Body of pancreas (tissue), 4 donors: ENCODE measurements at regions of chr20 and their contacts with region 1.

Region 1: DNA sequence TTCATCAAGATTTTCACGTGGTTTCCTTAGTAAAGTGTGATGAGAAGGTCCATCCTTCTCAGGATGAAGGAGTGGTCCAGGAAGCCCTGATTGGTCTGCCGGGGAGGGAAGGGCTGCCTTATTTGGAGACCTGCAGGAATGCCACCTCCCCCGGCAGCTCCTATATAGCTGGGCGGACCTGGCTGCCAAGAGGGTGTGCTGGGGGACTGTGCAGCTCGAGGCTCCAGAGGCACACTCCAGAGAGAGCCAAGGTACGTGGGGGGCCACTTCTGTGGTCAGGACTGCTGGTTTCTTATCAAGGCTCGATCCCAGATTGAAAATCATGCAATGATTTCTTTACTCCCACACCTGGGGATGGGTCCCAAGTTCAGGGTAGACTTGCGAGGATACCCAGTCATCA is at the start of gene PRND:
- DNase-seq: no peak
- ATAC-seq: no peak
- H3K4me3 ChIP-seq: no peak within 1 kb of the TSS
- H3K27ac ChIP-seq: no peak within 1 kb of the TSS
- H3K4me1 ChIP-seq: peaks cover 11% of the 10 kb centered on the region
- H3K27me3 ChIP-seq: no peaks in the 10 kb centered on the region
- CTCF ChIP-seq: no peak
- POLR2A ChIP-seq: no peak
- total RNA-seq, gene PRND: not detected

Region 2: GRCh38 chr20:4449957-4450715 is 271.6 kb before region 1 on chr20:
- intact Hi-C with region 1: no loop called
- DNase-seq: no peak
- ATAC-seq: no peak
- H3K4me3 ChIP-seq: no peak overlapping the region
- H3K27ac ChIP-seq: no peak overlapping the region
- H3K4me1 ChIP-seq: no peaks in the 10 kb centered on the region
- H3K27me3 ChIP-seq: no peaks in the 10 kb centered on the region
- CTCF ChIP-seq: no peak
- POLR2A ChIP-seq: no peak

Region 3: GRCh38 chr20:4563534-4563933 is 158.2 kb before region 1 on chr20:
- intact Hi-C with region 1: no loop called
- DNase-seq: peak in 1 of 4 donors; percentile 3
- ATAC-seq: no peak
- H3K4me3 ChIP-seq: no peak overlapping the region
- H3K27ac ChIP-seq: no peak overlapping the region
- H3K4me1 ChIP-seq: no peaks in the 10 kb centered on the region
- H3K27me3 ChIP-seq: no peaks in the 10 kb centered on the region
- CTCF ChIP-seq: no peak
- POLR2A ChIP-seq: no peak

Region 4: DNA sequence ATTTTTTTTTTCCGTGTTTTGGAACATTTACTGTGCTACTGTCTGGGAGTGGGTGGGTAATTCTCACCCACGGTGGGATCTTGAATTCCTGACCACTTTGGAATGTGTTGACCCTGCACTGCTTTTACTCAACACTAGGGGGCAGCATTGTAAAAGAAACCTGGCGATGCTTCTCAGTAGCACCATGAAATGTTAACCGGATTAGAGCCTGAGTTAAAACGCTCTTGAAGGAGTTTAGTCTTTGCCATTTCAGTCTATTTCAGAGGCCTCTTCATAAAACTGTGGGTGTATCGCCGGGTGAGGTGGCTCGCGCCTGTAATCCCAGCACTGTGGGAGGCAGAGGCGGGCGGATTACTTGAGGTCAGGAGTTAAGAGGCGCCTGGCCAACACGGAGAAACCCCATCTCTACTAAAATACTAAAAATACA is 114.4 kb before region 1 on chr20:
- intact Hi-C with region 1: loop called (anchors 2 kb)
- DNase-seq: peak; percentile 55 to 68 (median 60)
- ATAC-seq: peak; percentile 77
- H3K4me3 ChIP-seq: no peak overlapping the region
- H3K27ac ChIP-seq: no peak overlapping the region
- H3K4me1 ChIP-seq: no peaks in the 10 kb centered on the region
- H3K27me3 ChIP-seq: no peaks in the 10 kb centered on the region
- CTCF ChIP-seq: peak; percentile 79 to 96 (median 94)
- POLR2A ChIP-seq: no peak